A549 (cell line): ENCODE measurements at regions of chr10 and their contacts with region 1.

Region 1: GRCh38 chr10:71569775-71570588 is 149.6 kb downstream of the C10orf105 start:
- DNase-seq: peak; percentile 56 to 76
- ATAC-seq: peak; percentile 66 to 85; a peak in 4 of 6 replicates
- H3K4me3 ChIP-seq: no peak overlapping the region
- H3K27ac ChIP-seq: no peak overlapping the region
- H3K4me1 ChIP-seq: no peaks in the 10 kb centered on the region
- CTCF ChIP-seq: peak; percentile 86
- EP300 ChIP-seq: no peak
- POLR2A ChIP-seq: no peak
- RAD21 ChIP-seq: peak; percentile 78 to 81

Region 2: DNA sequence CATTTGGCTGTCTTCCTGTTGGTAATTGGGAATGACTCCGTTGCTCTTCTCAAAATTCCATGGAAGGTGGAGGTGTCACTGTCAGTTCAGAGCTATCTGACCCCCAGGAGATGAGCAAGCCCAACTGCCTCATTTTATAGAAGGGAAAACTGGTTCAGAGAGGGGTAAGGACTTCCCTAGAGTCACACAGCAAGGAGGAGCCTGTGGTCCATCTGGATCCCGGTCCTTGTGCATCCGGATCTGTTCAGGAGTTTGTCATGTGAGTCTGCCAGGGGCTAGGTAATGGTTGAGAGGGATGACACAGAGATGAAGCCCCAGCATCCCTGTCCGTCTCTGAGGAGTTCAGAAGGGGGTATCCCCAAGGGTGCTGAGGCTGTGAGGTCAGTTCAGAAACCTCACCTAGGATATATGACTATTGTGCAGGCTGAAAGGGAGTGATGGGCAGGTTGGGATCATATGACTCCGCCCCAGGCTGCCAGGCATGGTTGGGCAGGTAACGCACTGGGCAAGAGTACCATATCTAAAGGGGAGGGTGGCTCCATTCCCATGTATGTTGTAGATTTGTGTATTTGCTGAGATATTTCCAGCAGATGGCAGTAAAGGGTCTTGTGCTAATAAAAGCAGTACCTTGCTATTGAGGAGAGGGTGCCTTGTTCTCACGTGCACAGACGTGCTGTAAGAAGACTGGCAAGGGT is 267.0 kb before region 1 on chr10:
- CTCF ChIA-PET with region 1: interaction called, 11 read pairs
- POLR2A ChIA-PET with region 1: no interaction called
- DNase-seq: peak; percentile 73
- ATAC-seq: peak; percentile 75 to 90
- H3K4me3 ChIP-seq: no peak overlapping the region
- H3K27ac ChIP-seq: no peak overlapping the region
- H3K4me1 ChIP-seq: no peaks in the 10 kb centered on the region
- CTCF ChIP-seq: peak; percentile 56
- EP300 ChIP-seq: no peak
- POLR2A ChIP-seq: no peak
- RAD21 ChIP-seq: peak; percentile 37 to 52; a peak in 4 of 5 replicates

Region 3: DNA sequence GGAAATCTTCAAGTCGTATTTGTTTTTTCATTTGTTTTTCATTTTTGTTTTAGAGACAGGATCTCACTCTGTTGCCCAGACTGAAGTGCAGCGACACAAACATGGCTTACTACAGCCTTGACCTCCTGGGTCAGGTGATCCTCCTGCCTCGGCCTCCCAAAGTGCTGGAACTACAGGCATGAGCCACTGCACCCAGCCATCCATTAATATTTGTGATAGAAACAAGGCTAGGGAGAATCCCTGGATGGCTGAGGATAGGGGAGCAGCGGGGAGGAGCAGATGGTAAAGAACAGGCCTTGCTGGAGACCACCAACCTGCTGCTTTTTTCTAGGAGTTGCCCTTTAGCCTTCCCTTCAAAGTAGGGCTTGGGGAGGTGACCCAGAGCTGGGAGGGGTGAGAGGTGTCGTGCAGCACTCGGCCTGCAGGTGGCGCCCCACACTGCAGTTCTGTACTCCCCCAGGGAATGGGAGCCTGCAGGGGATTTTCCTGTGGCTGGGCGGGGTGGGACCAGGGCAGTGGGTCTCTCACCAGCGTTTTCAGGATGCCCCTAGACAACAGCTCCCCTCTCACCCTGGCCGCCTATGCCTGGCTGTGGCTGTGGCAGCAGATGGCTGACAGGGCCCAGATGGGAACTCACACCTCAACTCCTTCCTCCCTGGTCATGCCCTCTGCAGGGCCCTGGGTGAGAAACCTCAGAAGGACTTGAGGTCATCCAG is 185.9 kb before region 1 on chr10:
- CTCF ChIA-PET with region 1: interaction called, 163 read pairs
- POLR2A ChIA-PET with region 1: no interaction called
- DNase-seq: peak; percentile 58 to 78
- ATAC-seq: peak; percentile 91 to 98
- H3K4me3 ChIP-seq: no peak overlapping the region
- H3K27ac ChIP-seq: no peak overlapping the region
- H3K4me1 ChIP-seq: no peaks in the 10 kb centered on the region
- CTCF ChIP-seq: peak; percentile 86
- EP300 ChIP-seq: no peak
- POLR2A ChIP-seq: no peak
- RAD21 ChIP-seq: peak; percentile 85 to 89

Region 4: GRCh38 chr10:71468363-71469094 is 101.5 kb before region 1 on chr10:
- CTCF ChIA-PET with region 1: interaction called, 12 read pairs
- POLR2A ChIA-PET with region 1: no interaction called
- DNase-seq: no peak
- ATAC-seq: peak; percentile 26 to 36; a peak in 3 of 6 replicates
- H3K4me3 ChIP-seq: no peak overlapping the region
- H3K27ac ChIP-seq: no peak overlapping the region
- H3K4me1 ChIP-seq: no peaks in the 10 kb centered on the region
- CTCF ChIP-seq: no peak
- EP300 ChIP-seq: no peak
- POLR2A ChIP-seq: no peak
- RAD21 ChIP-seq: no peak

Region 5: DNA sequence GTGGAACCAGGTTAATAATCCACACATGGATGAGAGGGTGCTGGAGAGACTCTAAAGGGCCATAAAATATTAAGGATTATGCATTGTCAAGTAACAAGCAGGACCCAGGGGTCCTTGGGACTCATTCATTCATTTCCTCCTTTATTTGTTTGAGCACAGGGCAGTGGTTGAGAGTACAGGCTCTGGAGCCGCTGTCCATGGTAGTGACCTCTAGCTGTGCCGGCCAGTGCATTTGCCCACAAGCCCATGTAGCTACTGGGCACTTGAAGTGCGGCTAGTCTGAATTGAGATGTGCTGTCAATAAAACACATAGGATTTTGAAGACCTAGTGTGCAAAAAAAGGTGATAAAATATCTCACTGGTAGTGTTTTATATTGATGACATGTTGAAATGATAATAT is 12.0 kb after region 1 on chr10:
- CTCF ChIA-PET with region 1: interaction called, 57 read pairs
- POLR2A ChIA-PET with region 1: no interaction called
- DNase-seq: peak in 1 of 2 experiments; percentile 26
- ATAC-seq: 0 out of 6 replicates have a peak, but pooled peaks of 1 of the 2 experiments have one; percentile 47
- H3K4me3 ChIP-seq: no peak overlapping the region
- H3K27ac ChIP-seq: no peak overlapping the region
- H3K4me1 ChIP-seq: no peaks in the 10 kb centered on the region
- CTCF ChIP-seq: no peak
- EP300 ChIP-seq: no peak
- POLR2A ChIP-seq: no peak
- RAD21 ChIP-seq: no peak

Region 6: DNA sequence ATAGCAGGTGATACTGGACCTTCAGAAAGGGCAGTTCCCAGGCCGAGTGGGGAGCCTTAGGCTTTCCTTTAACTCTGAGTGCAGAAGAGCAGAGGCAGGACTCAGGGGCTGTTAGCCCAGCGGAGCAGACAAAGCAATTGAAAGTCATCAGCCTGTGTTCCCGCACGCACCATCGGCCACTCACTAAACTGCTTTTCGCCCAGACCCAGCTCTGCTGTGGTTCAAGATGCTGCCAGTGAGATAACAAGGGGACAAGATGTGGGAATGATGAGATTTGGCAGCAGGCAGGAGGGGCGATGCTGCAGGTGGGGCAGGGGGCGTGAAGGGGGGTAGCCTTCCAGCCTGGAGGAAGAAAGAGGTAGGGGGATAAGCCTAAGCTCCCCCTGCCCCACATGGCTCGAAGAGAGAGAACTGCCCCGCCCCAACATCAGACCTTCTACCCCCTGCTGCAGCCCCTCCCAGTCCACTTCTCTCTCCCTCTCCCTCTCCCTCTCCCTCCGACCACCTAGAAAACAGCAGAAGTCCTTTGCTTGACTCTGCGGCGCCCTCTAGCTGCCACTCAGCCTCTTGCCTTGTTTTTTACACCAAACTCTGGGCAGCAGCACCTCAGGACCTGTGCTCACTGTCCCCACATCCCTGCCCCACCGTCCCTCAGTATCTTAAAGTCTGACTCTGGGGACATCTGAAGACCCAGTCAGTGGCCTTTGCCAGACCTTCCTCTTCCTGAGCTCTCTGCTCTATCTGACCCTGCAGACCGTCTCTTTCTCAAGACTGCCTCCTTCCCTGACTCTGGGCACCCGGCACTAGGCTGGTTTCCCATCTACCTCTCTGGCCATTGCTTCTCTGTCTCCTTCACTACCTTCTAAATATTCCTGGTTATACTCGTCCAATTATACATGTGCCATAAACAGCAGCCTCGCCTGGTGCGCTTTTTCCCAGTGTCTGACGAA is 39.1 kb after region 1 on chr10:
- CTCF ChIA-PET with region 1: interaction called, 54 read pairs
- POLR2A ChIA-PET with region 1: no interaction called
- DNase-seq: peak; percentile 63 to 71
- ATAC-seq: peak; percentile 58 to 86
- H3K4me3 ChIP-seq: no peak overlapping the region
- H3K27ac ChIP-seq: no peak overlapping the region
- H3K4me1 ChIP-seq: peaks cover 12% of the 10 kb centered on the region; the same call in 2 of the 3 replicates
- CTCF ChIP-seq: peak; percentile 69
- EP300 ChIP-seq: no peak
- POLR2A ChIP-seq: no peak
- RAD21 ChIP-seq: peak; percentile 70 to 78

Region 7: GRCh38 chr10:71912431-71912830 is 342.4 kb after region 1 on chr10:
- CTCF ChIA-PET with region 1: no interaction called
- POLR2A ChIA-PET with region 1: no interaction called
- DNase-seq: peak in 1 of 2 experiments; percentile 35
- ATAC-seq: peak; percentile 83 to 85
- H3K4me3 ChIP-seq: no peak overlapping the region
- H3K27ac ChIP-seq: no peak overlapping the region
- H3K4me1 ChIP-seq: 0 out of 3 replicates have a peak, but pooled peaks cover 3% of the 10 kb centered on the region
- CTCF ChIP-seq: no peak
- EP300 ChIP-seq: no peak
- POLR2A ChIP-seq: no peak
- RAD21 ChIP-seq: no peak